Activated B cell treated with CpG ODN at 0.5 μM for 24 hours (primary cell): ENCODE measurements at regions of chr6 and their contacts with region 1.

Region 1: DNA sequence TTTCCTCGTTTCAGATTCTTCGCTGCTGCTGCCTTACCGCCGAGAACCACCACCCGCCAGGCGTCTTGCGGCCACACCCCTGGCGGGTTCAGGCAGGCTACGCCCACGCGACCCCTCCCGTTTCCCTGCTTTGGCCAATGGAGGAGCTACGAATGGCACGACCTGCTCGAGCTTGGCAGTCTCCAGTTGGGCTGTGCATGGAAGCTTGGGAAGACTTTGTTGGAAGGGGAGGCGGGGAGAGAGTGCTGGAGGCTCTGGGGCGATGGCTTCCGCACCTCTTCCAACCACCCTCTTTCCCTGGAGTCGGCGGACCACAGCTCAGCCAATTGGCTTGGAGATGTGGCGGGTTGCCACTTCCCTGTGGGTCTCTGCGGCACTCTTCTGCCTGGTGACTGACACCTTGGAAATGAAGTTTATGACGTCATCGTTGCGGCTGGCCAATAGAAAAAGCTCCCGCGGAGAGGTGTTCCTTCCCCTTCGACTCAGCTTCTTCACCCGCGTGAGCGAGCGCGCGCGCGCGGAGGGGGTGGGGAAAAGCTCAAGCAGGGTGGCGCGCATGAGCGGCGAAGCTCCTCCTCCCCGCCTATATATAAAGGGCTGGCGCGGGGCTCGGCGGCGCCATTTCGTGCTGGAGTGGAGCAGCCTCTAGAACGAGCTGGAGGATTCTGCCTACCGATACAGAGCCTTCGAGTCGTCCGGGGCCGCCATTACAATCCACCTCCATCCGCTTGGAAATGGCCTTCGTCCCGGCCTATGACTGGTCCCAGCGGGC is 3.4 kb downstream of the BRD2 start:
- DNase-seq: peak; percentile 99
- ATAC-seq: peak; percentile 47
- H3K4me3 Mint-ChIP-seq: peak overlapping the region; percentile 91
- H3K27ac Mint-ChIP-seq: peak overlapping the region; percentile 99
- H3K4me1 Mint-ChIP-seq: peaks cover 44% of the 10 kb centered on the region
- H3K27me3 Mint-ChIP-seq: no peaks in the 10 kb centered on the region
- CTCF ChIP-seq: no peak

Region 2: GRCh38 chr6:32190054-32190851 is 781.5 kb before region 1 on chr6 and contains the start of gene PBX2:
- CTCF ChIA-PET with region 1: no interaction called
- POLR2A ChIA-PET with region 1: interaction called, 13 read pairs
- intact Hi-C with region 1: loop called (anchors 2 kb)
- DNase-seq: peak; percentile 61
- ATAC-seq: peak; percentile 86
- H3K4me3 Mint-ChIP-seq: peak within 1 kb of the TSS; percentile 91
- H3K27ac Mint-ChIP-seq: peak within 1 kb of the TSS; percentile 96
- H3K4me1 Mint-ChIP-seq: peaks cover 85% of the 10 kb centered on the region
- H3K27me3 Mint-ChIP-seq: no peaks in the 10 kb centered on the region
- CTCF ChIP-seq: no peak
- total RNA-seq, gene PBX2: 134 and 153 TPM in 2 replicates

Region 3: DNA sequence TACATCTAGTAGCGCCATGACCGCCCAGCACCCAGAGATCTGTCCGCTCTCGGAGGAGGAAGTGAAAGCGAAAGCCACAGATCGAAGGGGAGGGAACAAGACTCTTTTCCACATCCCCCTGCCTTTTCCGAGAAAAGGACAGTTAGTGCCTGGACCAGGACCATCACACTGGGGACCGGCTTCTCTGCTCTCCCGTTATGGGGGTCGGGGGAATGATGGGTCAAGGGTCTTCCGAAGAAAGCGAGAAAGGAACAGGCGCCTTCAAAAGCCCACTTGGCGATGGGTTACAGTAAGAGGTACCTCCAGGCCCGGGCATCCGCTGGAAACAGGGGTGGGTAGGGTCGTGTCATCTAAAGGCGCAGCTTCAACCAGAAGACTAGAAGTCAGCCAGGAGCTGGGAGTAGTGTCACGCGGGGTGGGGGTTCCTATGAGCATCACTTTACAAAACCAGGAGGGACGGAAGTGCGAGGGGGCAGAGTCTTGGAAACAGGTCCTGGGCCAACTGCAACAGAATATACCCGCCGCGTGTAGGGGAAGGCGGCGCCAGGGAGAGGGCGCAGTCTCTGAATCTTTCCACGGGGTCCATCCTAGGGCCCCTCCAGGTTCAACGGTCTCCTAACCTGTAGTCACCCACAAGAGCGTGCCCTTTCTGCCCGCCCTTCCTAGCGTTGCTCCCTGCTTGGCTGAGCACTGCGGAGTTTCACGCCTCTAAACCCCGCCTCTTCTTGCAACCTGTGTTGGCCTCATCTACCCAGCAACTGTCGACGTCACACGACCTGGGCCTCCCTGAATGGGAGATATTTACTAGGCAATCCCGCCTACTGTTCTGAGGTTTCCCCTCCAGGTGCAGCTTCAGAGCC is 127.6 kb before region 1 on chr6 and contains the start of gene PSMB8:
- CTCF ChIA-PET with region 1: interaction called, 3 read pairs
- POLR2A ChIA-PET with region 1: interaction called, 190 read pairs
- intact Hi-C with region 1: loop called (anchors 1 kb)
- DNase-seq: peak; percentile 96
- ATAC-seq: peak; percentile 78
- H3K4me3 Mint-ChIP-seq: peak within 1 kb of the TSS; percentile 99
- H3K27ac Mint-ChIP-seq: peak within 1 kb of the TSS; percentile 100
- H3K4me1 Mint-ChIP-seq: peaks cover 92% of the 10 kb centered on the region
- H3K27me3 Mint-ChIP-seq: no peaks in the 10 kb centered on the region
- CTCF ChIP-seq: no peak
- total RNA-seq, gene PSMB8: 182 and 194 TPM in 2 replicates

Region 4: GRCh38 chr6:32920715-32921114 is 51.1 kb before region 1 on chr6:
- CTCF ChIA-PET with region 1: no interaction called
- POLR2A ChIA-PET with region 1: interaction called, 28 read pairs
- intact Hi-C with region 1: no loop called
- DNase-seq: no peak
- ATAC-seq: peak; percentile 40
- H3K4me3 Mint-ChIP-seq: peak overlapping the region; percentile 67
- H3K27ac Mint-ChIP-seq: peak overlapping the region; percentile 81
- H3K4me1 Mint-ChIP-seq: peaks cover 73% of the 10 kb centered on the region
- H3K27me3 Mint-ChIP-seq: no peaks in the 10 kb centered on the region
- CTCF ChIP-seq: no peak

Region 5: GRCh38 chr6:33000055-33000454 is 28.3 kb after region 1 on chr6:
- CTCF ChIA-PET with region 1: no interaction called
- POLR2A ChIA-PET with region 1: interaction called, 26 read pairs
- intact Hi-C with region 1: no loop called
- DNase-seq: no peak
- ATAC-seq: peak; percentile 92
- H3K4me3 Mint-ChIP-seq: peak overlapping the region; percentile 47
- H3K27ac Mint-ChIP-seq: peak overlapping the region; percentile 79
- H3K4me1 Mint-ChIP-seq: peaks cover 12% of the 10 kb centered on the region
- H3K27me3 Mint-ChIP-seq: no peaks in the 10 kb centered on the region
- CTCF ChIP-seq: no peak

Region 6: DNA sequence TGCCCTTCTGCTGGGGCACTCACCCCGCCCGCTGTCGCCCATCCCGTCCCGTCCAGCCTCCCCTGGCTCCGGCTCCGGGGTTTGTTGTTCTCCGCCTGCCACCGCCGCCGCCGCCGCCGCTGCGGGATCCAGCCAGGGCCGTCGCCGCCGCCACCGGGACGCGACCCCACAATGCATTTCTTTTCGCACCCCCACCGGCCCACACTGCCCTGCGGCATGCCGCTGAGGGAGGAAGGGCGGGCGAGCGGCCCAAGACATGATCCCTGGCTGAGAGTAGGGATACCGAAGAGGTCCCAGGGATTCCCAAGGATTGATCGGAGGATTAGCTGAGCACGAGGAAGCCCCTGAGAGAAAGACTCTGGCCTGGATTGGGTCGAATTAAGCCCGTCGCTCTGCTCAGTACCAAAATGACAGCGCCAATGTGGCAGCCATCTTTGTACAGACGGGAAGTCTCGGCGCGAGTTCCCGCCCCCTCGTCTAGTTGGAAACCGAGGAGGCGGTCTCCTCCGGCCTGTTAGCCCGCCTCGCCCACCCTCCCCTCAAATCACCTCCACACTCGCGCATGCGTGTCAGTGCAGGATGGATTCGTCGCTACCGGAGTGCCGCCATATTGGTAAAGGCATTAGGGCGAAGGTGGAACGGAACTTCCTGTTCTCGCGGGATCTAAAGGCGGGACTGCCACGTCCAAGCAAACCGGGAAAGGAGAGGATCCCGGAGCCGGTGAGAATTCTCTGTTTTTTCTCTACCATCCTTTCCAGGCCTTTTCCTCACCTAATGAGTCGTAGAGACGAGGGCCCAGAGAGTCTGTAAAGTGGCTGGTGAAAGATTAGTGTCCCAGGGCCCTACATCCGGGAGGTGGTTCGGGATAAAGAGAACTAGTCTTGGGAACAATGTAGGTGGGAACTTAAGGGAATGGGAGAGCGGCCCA is 228.7 kb after region 1 on chr6 and contains the starts of genes RXRB and SLC39A7:
- CTCF ChIA-PET with region 1: no interaction called
- POLR2A ChIA-PET with region 1: interaction called, 18 read pairs
- intact Hi-C with region 1: no loop called
- DNase-seq: peak; percentile 89
- ATAC-seq: peak; percentile 74
- H3K4me3 Mint-ChIP-seq: peak within 1 kb of the TSS; percentile 99
- H3K27ac Mint-ChIP-seq: peak within 1 kb of the TSS; percentile 96
- H3K4me1 Mint-ChIP-seq: peaks cover 75% of the 10 kb centered on the region
- H3K27me3 Mint-ChIP-seq: no peaks in the 10 kb centered on the region
- CTCF ChIP-seq: no peak
- total RNA-seq, gene RXRB: 72.4 and 74.3 TPM in 2 replicates
- total RNA-seq, gene SLC39A7: 31.7 and 35.2 TPM in 2 replicates

Region 7: DNA sequence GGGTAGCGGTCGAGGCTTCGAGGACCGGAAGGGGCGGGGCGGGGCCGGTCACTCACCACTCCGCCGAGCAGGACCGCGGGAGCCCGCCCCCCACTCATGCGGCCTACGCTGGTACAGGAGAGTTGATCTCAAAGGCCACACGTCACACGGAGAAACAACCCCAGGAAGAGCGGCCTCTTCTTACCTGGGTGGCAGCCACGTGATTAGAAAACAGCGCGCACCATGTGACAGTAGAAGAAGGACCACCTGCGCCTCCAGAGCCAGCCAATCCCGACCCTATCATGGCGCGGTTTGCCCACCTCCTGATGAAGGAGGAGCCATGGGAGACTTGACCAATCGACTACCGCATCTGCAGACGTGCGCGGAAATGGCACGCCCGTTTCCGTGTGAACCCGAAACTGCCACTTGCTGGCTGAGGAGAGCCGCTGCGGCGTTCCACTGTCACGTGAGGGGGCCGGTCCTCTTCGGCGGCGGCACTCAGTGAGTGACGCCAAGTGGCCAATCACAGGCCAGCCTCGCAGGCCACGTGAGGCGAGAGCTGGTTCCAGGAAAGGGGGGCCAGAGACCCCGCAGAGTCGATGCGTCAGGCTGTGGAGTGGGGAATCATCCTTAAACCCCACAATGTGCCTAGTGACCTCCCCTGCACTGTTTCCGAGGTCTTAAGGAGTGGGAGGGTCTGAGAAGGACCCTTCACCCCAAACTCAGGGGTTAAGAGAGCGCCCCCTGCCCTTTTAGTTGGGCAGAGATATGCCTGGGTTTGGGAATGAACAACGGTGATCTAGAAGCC is 446.3 kb after region 1 on chr6 and contains the start of gene CUTA:
- CTCF ChIA-PET with region 1: no interaction called
- POLR2A ChIA-PET with region 1: interaction called, 5 read pairs
- intact Hi-C with region 1: loop called (anchors 1 kb)
- DNase-seq: peak; percentile 92
- ATAC-seq: peak; percentile 90
- H3K4me3 Mint-ChIP-seq: peak within 1 kb of the TSS; percentile 91
- H3K27ac Mint-ChIP-seq: peak within 1 kb of the TSS; percentile 96
- H3K4me1 Mint-ChIP-seq: peaks cover 66% of the 10 kb centered on the region
- H3K27me3 Mint-ChIP-seq: no peaks in the 10 kb centered on the region
- CTCF ChIP-seq: no peak
- total RNA-seq, gene CUTA: 111 and 120 TPM in 2 replicates